PC-3 (cell line): ENCODE measurements at regions of chr4 and their contacts with region 1.

Region 1: GRCh38 chr4:101411935-101412334 is 64.6 kb upstream of the PPP3CA start:
- DNase-seq: peak; percentile 84
- ATAC-seq: peak; percentile 89
- H3K4me3 ChIP-seq: peak overlapping the region; percentile 37
- H3K27ac ChIP-seq: peak overlapping the region; percentile 96
- H3K4me1 ChIP-seq: peaks cover 12% of the 10 kb centered on the region
- H3K27me3 ChIP-seq: no peaks in the 10 kb centered on the region
- CTCF ChIP-seq: no peak

Region 2: GRCh38 chr4:101356928-101357327 is 55.0 kb before region 1 on chr4:
- CTCF ChIA-PET with region 1: no interaction called
- POLR2A ChIA-PET with region 1: interaction called, 10 read pairs
- intact Hi-C with region 1: loop called (anchors 2 kb)
- DNase-seq: peak; percentile 92
- ATAC-seq: peak; percentile 80
- H3K4me3 ChIP-seq: peak overlapping the region; percentile 51
- H3K27ac ChIP-seq: peak overlapping the region; percentile 97
- H3K4me1 ChIP-seq: peaks cover 33% of the 10 kb centered on the region
- H3K27me3 ChIP-seq: no peaks in the 10 kb centered on the region
- CTCF ChIP-seq: no peak